ENCODE measurements at regions of chr1 and their contacts with region 1.

Region 1: GRCh38 chr1:111582644-111583618 is 36.7 kb upstream of the RAP1A start:
- DNase-seq: no peak
- H3K4me3 ChIP-seq: no peak overlapping the region
- H3K27ac ChIP-seq: no peak overlapping the region
- H3K27me3 ChIP-seq: no peaks in the 10 kb centered on the region
- CTCF ChIP-seq: no peak

Region 2: DNA sequence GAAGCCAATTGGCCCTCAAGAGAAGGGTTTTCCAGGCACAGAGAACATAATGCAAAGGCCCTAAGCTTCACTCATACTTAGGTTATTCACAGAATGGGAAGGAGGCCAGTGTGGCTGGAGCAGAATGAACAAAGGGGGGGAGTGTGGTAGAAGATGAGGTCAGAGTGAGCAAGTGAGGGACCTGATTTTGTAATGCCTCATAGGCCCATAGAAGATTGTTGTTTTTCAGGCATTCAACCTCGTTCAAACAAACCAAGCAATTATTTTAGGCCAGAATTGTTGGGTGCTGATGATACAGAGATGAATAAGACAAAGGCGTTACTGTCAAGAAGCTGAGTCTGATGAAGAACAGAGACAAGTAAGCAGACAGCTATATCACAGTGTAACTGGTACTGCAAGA is 17.9 kb before region 1 on chr1:
- CTCF ChIA-PET with region 1: no interaction called
- POLR2A ChIA-PET with region 1: no interaction called
- DNase-seq: peak; percentile 74
- H3K4me3 ChIP-seq: no peak overlapping the region
- H3K27ac ChIP-seq: peak overlapping the region; percentile 31
- H3K27me3 ChIP-seq: no peaks in the 10 kb centered on the region
- CTCF ChIP-seq: no peak

Region 3: GRCh38 chr1:111603979-111604378 is 21.0 kb after region 1 on chr1:
- CTCF ChIA-PET with region 1: no interaction called
- POLR2A ChIA-PET with region 1: no interaction called
- DNase-seq: no peak
- H3K4me3 ChIP-seq: no peak overlapping the region
- H3K27ac ChIP-seq: no peak overlapping the region
- H3K27me3 ChIP-seq: no peaks in the 10 kb centered on the region
- CTCF ChIP-seq: no peak

Region 4: GRCh38 chr1:112402682-112403643 is 820.0 kb after region 1 on chr1:
- CTCF ChIA-PET with region 1: interaction called, 12 read pairs
- POLR2A ChIA-PET with region 1: no interaction called
- DNase-seq: no peak
- H3K4me3 ChIP-seq: no peak overlapping the region
- H3K27ac ChIP-seq: peak overlapping the region; percentile 87
- H3K27me3 ChIP-seq: no peaks in the 10 kb centered on the region
- CTCF ChIP-seq: no peak

Measured in AG04450 (cell line).